Psoas muscle (tissue), 8 donors: ENCODE measurements at regions of chr9 and their contacts with region 1.

Region 1: DNA sequence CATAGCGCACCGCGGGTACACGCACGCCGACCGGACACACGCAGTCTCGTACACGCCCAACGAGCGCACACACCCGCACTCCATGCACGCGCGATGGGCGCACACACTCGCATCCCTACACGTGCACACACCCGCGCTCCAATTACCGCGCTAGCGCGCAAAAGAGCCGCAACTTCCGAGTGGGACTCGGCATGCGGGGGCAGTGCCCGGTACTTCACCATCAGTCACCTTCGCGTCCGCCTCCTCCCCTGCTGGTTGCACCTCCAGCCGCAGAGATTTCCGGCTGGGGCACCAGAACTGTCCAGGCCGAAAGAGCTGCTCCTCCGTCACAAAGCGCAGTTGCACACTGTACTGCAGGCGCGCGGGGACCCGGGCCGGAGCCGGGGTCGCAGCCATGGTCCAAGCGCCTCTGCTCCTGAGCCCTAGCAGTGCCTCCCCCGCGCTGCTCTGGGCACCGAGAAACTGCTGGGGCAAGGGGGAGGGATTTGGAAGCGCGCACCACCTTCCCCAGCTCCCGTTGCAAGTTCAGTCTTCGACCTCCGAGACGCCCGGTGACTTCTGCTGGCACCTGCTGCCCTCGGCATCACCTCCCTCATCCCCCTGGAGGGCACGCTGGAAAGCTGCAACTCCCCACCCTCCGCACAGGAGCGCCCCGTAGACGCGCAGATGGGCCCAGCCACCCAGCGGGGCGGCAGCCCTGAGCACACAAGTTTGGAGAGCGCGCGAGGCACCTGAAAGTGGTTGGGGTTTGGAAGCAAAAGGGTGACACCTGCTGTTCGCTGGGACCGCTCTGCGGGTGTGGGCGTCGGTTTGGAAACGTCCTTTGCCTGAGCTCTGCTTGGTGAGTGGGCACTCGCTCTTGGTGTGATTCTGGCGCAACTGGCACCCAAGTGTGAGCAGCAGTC is 337.4 kb upstream of the PUM3 start:
- DNase-seq: peak; percentile 17 to 55
- ATAC-seq: peak; percentile 48 to 83 (median 61)
- H3K4me3 ChIP-seq: peak overlapping the region; percentile 54
- H3K27ac ChIP-seq: no peak overlapping the region
- H3K4me1 ChIP-seq: peaks cover 5% of the 10 kb centered on the region
- H3K27me3 ChIP-seq: peaks cover 0 to 30% (median 4%) of the 10 kb centered on the region in 3 donors
- CTCF ChIP-seq: peak; percentile 14

Region 2: GRCh38 chr9:4117835-4118610 is 936.7 kb after region 1 on chr9:
- intact Hi-C with region 1: loop called in 1 of 2 experiments (anchors 5 kb)
- DNase-seq: peak in 1 of 2 donors; percentile 47
- ATAC-seq: no peak
- H3K4me3 ChIP-seq: no peak overlapping the region
- H3K27ac ChIP-seq: no peak overlapping the region
- H3K4me1 ChIP-seq: no peaks in the 10 kb centered on the region
- H3K27me3 ChIP-seq: no peaks in the 10 kb centered on the region
- CTCF ChIP-seq: no peak